Panc1 (cell line): ENCODE measurements at regions of chr13 and their contacts with region 1.

Region 1: GRCh38 chr13:28220166-28220565 is 81.8 kb downstream of the PAN3 start:
- DNase-seq: no peak
- ATAC-seq: no peak
- H3K4me3 ChIP-seq: no peak overlapping the region
- H3K27ac ChIP-seq: no peak overlapping the region
- H3K4me1 ChIP-seq: no peaks in the 10 kb centered on the region
- H3K27me3 ChIP-seq: no peaks in the 10 kb centered on the region
- CTCF ChIP-seq: no peak

Region 2: DNA sequence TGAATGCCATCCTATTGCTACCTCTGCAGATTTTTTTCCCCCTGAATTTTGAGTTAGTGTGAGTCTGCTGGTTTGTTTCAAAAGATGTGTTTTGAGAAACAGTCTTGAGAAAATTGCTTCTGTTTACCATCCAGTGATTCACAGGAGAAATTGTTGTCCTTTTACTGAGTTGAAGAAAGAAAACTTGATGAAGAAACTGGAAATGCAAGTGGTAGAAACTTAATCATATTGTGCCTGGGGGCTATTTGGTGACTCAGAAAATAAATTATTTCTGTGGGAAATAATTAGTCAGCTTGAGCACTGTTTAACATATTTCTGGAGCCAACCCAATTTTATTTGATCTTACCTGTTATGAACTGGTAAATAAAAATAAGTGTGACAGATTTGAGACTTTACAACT is 46.4 kb before region 1 on chr13:
- CTCF ChIA-PET with region 1: interaction called, 11 read pairs
- POLR2A ChIA-PET with region 1: no interaction called
- in situ Hi-C with region 1: no loop called
- intact Hi-C with region 1: no loop called
- DNase-seq: no peak
- ATAC-seq: no peak
- H3K4me3 ChIP-seq: no peak overlapping the region
- H3K27ac ChIP-seq: no peak overlapping the region
- H3K4me1 ChIP-seq: no peaks in the 10 kb centered on the region
- H3K27me3 ChIP-seq: no peaks in the 10 kb centered on the region
- CTCF ChIP-seq: no peak